WTC11 (cell line): ENCODE measurements at regions of chr7 and their contacts with region 1.

Region 1: DNA sequence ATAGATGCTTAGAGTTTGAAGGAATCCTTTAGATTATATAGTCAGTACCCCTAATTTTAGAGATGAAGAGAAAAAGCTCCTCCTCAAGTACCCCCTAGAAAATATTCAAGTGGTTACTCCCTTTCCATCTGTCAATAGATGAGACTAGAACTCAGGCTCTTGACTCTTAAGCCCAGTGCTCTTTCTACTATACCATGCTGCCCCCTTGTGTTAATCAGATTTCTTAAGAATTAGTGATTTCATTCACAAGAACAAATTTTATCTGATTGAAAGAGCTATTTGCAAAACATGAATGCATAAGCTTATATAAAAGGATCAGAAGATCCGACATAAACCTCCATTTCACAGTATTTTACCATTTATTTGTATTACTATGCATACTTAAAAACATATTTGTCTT is 179.3 kb downstream of the TFEC start:
- DNase-seq: no peak
- ATAC-seq: peak; percentile 73
- H3K4me3 Mint-ChIP-seq: no peak overlapping the region
- H3K27ac Mint-ChIP-seq: no peak overlapping the region
- H3K4me1 Mint-ChIP-seq: peaks cover 7% of the 10 kb centered on the region; the same call in 1 of the 2 replicates
- H3K27me3 Mint-ChIP-seq: no peaks in the 10 kb centered on the region
- CTCF ChIP-seq: peak; percentile 23; the same call in 1 of the 2 replicates

Region 2: GRCh38 chr7:115679976-115680375 is 171.3 kb before region 1 on chr7:
- CTCF ChIA-PET with region 1: interaction called, 19 read pairs
- POLR2A ChIA-PET with region 1: no interaction called
- DNase-seq: peak; percentile 34
- ATAC-seq: peak; percentile 74
- H3K4me3 Mint-ChIP-seq: no peak overlapping the region
- H3K27ac Mint-ChIP-seq: no peak overlapping the region
- H3K4me1 Mint-ChIP-seq: peaks cover 28% of the 10 kb centered on the region
- H3K27me3 Mint-ChIP-seq: no peaks in the 10 kb centered on the region
- CTCF ChIP-seq: no peak

Region 3: DNA sequence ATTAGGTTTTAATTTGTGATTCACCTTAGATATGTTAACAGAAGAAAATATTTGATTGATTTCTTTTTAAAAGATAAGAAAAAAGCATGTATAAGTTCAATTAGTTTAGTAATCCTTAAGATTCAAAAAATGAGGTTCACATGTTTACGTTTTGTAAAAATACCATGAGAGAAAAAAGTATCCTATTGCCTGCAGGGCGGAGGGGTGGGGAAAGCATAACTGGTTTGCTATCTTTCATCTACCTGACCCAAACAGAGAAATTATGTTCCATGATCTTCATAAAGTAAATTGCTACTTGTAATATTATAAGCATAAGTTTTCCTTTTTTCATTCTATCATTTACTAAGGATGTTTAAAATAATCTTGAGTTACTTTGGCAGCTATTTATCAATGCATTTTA is 66.3 kb after region 1 on chr7:
- CTCF ChIA-PET with region 1: no interaction called
- POLR2A ChIA-PET with region 1: no interaction called
- DNase-seq: no peak
- ATAC-seq: no peak
- H3K4me3 Mint-ChIP-seq: no peak overlapping the region
- H3K27ac Mint-ChIP-seq: no peak overlapping the region
- H3K4me1 Mint-ChIP-seq: no peaks in the 10 kb centered on the region; the same call in 1 of the 2 replicates
- H3K27me3 Mint-ChIP-seq: no peaks in the 10 kb centered on the region
- CTCF ChIP-seq: no peak

Region 4: DNA sequence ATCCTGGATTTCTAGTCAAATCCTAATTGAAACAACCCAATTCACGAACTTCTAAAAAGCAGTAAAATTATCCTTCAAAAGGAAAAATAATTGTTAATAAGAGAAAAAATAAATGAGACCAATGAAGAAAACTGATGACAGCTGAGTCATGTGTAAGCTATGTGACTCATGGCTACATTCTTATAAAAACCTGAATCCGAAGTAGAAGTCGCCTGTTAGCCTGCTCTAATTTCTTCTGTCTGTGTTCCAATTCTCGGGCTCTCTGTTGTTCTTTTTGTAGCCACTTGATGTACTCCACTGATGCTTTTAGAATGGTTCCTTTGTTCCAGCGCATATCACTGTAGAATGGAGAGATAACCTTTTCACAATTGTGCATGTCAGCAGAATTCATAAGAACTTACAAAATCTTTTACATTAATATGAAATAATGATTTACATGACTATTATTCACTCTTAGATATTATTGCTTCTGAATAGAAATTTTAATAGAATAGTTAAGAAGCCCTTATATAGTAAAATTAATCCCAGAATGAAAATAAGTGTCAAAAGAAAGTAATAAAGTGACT is 90.5 kb after region 1 on chr7:
- CTCF ChIA-PET with region 1: no interaction called
- POLR2A ChIA-PET with region 1: no interaction called
- DNase-seq: no peak
- ATAC-seq: no peak
- H3K4me3 Mint-ChIP-seq: no peak overlapping the region
- H3K27ac Mint-ChIP-seq: no peak overlapping the region
- H3K4me1 Mint-ChIP-seq: no peaks in the 10 kb centered on the region
- H3K27me3 Mint-ChIP-seq: no peaks in the 10 kb centered on the region
- CTCF ChIP-seq: no peak

Region 5: DNA sequence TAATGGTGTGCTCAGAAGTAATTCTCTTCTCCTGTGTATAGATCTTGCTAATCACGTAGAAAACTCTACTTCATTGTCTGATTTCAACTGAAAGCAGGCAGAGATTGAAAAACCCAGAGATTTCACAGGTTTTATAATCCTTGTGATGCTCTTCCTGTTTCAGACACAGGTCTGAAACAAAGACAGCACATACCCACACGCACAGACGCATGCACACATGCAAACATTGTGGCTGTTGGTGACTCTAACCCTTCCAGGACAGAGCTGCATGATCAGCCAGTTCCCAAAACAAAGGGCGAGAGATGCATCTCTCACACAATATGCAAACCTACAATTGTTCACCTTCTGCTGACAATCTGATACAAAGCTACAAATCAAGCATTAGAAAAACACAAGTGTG is 190.3 kb after region 1 on chr7:
- CTCF ChIA-PET with region 1: no interaction called
- POLR2A ChIA-PET with region 1: no interaction called
- DNase-seq: no peak
- ATAC-seq: no peak
- H3K4me3 Mint-ChIP-seq: no peak overlapping the region
- H3K27ac Mint-ChIP-seq: no peak overlapping the region; the same call in 1 of the 2 replicates
- H3K4me1 Mint-ChIP-seq: peaks cover 12% of the 10 kb centered on the region; the same call in 1 of the 2 replicates
- H3K27me3 Mint-ChIP-seq: no peaks in the 10 kb centered on the region; the same call in 1 of the 2 replicates
- CTCF ChIP-seq: no peak